H1 (cell line): ENCODE measurements at regions of chr10 and their contacts with region 1.

Region 1: DNA sequence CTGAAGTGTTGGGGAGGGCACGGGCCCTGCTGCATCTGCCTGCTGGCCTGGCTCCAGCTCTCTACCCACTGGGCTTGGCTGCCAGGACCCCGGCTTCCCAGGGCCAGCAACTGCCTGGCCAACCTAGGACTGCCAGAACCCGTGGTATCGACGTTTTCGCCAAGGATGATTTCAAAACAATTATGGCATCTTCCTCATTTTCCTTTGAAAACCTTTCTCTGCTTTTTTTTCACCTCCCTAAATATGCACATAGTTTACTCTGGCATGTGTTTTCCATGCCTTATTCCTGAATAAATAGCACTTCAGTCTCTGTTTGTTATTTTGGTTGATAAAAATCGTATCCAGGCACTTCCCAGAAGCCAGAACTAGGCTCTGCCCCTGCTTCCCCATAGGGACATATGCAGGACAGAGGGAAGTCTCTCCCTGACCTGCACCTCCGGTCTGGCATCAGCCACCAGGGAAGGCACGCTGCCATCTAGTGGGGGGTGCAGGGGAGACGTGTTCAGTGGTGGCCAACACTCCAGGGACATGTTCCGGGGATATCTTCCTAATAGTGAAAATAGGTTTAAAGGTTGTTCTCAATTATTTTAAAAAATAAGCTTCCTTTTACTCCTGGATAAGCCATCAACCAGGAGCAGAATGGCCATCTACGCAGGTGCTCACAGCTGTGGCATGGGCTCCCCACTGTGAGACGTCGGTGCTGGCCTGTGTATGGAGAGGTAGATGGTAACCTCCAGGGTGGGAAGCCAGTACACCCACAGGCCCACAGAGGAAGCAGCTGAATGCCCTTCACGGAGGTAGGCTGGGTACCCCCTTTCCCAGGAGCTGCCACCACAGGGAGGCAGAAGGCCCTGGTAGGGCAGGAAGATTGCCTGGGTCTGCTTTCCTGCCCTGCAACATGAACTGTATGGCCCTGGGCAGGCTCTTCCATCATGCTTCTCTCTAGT is 30.7 kb upstream of the ANTXRL start:
- DNase-seq: peak; percentile 62 to 91
- H3K4me3 ChIP-seq: no peak overlapping the region
- H3K27ac ChIP-seq: no peak overlapping the region
- H3K4me1 ChIP-seq: peaks cover 0 to 2% (median 0%) of the 10 kb centered on the region in 4 experiments; a peak in 2 of 7 replicates
- H3K27me3 ChIP-seq: peaks cover 0 to 2% (median 0%) of the 10 kb centered on the region in 4 experiments; a peak in 1 of 7 replicates
- CTCF ChIP-seq: peak; percentile 87 to 95 (median 90)
- EP300 ChIP-seq: no peak
- POLR2A ChIP-seq: no peak
- RAD21 ChIP-seq: peak; percentile 80 to 84

Region 2: GRCh38 chr10:46092524-46093081 is 163.5 kb before region 1 on chr10:
- CTCF ChIA-PET with region 1: no interaction called
- POLR2A ChIA-PET with region 1: no interaction called
- DNase-seq: no peak
- H3K4me3 ChIP-seq: no peak overlapping the region
- H3K27ac ChIP-seq: no peak overlapping the region
- H3K4me1 ChIP-seq: peaks cover 0 to 5% (median 2%) of the 10 kb centered on the region in 4 experiments; a peak in 3 of 7 replicates
- H3K27me3 ChIP-seq: no peaks in the 10 kb centered on the region
- CTCF ChIP-seq: no peak
- EP300 ChIP-seq: no peak
- POLR2A ChIP-seq: no peak
- RAD21 ChIP-seq: no peak

Region 3: GRCh38 chr10:46268076-46268881 is 12.2 kb after region 1 on chr10:
- CTCF ChIA-PET with region 1: interaction called, 23 read pairs
- POLR2A ChIA-PET with region 1: interaction called, 3 read pairs
- DNase-seq: no peak
- H3K4me3 ChIP-seq: no peak overlapping the region
- H3K27ac ChIP-seq: no peak overlapping the region
- H3K4me1 ChIP-seq: no peaks in the 10 kb centered on the region
- H3K27me3 ChIP-seq: no peaks in the 10 kb centered on the region
- CTCF ChIP-seq: no peak
- EP300 ChIP-seq: no peak
- POLR2A ChIP-seq: no peak
- RAD21 ChIP-seq: no peak

Region 4: DNA sequence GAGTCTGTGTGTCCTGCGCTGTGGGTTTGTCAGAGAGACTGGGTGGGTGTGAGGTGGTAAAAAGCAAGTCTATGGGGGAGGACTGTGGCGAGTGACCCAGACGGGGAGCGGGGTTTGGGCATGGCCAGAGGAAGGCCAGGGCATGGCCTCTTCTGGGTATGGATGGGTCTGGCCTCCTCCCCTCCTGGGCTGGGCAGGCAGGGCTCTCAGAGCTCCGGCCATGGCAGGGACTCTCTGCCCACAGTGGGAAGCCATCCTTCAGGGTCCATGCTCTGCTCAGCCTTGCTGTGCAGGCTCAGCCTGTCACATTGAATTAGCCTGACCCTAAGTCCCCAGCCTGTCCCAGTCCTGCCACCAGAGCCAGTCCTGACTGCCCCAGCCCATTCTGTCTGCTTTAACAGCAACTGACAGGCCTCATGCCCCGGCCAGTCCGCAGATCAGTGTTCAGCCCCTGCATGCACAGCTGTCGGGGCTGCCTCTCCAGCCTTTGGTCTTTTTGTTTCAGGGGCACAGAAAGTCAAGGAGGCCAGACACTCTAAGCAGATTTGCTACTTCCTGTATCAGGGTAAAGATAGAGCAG is 38.7 kb after region 1 on chr10:
- CTCF ChIA-PET with region 1: no interaction called
- POLR2A ChIA-PET with region 1: no interaction called
- DNase-seq: no peak
- H3K4me3 ChIP-seq: no peak overlapping the region
- H3K27ac ChIP-seq: no peak overlapping the region
- H3K4me1 ChIP-seq: peaks cover 0 to 10% (median under 1%) of the 10 kb centered on the region in 4 experiments; a peak in 4 of 7 replicates
- H3K27me3 ChIP-seq: no peaks in the 10 kb centered on the region; a peak in 1 of 7 replicates
- CTCF ChIP-seq: no peak
- EP300 ChIP-seq: no peak
- POLR2A ChIP-seq: no peak
- RAD21 ChIP-seq: no peak